ENCODE measurements at regions of chr1 and their contacts with region 1.

Region 1: GRCh38 chr1:220776720-220777326 is 9.9 kb upstream of the MTARC1 start:
- DNase-seq: peak; percentile 78
- CTCF ChIP-seq: peak; percentile 92

Region 2: GRCh38 chr1:219837274-219837993 is 939.4 kb before region 1 on chr1:
- in situ Hi-C with region 1: loop called (anchors 25 kb)
- DNase-seq: peak; percentile 47
- CTCF ChIP-seq: peak; percentile 28

Region 3: DNA sequence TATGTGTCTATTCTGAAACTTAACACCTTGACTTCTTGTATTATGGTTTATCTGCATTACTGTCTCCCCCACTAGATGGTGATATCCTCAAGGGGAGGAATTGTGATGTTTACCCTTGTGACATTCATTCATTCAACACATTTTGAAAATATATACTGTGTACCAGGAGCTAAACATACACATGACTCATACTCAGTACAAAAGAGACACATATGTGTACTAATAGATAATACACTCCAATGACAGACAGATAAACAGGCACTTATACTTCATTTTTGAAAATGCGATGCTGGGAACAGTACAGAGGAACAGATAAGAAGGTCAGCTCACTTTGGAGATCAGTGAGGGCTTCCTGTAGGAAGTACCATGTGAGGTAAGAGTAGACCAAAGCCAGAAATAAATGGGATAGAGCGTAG is 495.7 kb before region 1 on chr1:
- in situ Hi-C with region 1: loop called (anchors 25 kb)
- DNase-seq: no peak
- CTCF ChIP-seq: peak; percentile 41

Region 4: DNA sequence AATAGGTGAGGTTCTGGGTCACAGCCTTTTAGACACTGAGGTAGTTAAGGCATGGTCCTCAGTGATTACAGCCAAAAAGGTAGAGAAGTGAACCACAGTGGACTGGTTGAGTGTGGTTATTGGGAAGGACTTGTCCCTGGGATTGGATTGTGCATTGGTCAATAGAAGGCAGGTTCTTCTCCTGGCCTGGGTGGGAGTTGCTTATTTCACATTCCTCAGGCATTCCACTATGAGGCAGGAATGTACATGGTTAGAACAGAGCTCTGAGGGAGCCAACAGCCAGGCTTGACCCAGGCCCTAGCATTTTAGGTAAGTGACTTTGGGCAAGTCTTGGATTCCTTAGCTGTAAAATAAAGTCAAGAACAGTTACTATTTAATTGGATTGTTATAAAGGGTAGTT is 346.8 kb before region 1 on chr1:
- in situ Hi-C with region 1: no loop called
- DNase-seq: no peak
- CTCF ChIP-seq: no peak

Region 5: GRCh38 chr1:220655509-220655908 is 121.3 kb before region 1 on chr1:
- in situ Hi-C with region 1: no loop called
- DNase-seq: peak; percentile 47
- CTCF ChIP-seq: no peak

Region 6: GRCh38 chr1:220680085-220680687 is 96.6 kb before region 1 on chr1:
- in situ Hi-C with region 1: loop called (anchors 10 kb)
- DNase-seq: peak; percentile 63
- CTCF ChIP-seq: peak; percentile 49

Region 7: DNA sequence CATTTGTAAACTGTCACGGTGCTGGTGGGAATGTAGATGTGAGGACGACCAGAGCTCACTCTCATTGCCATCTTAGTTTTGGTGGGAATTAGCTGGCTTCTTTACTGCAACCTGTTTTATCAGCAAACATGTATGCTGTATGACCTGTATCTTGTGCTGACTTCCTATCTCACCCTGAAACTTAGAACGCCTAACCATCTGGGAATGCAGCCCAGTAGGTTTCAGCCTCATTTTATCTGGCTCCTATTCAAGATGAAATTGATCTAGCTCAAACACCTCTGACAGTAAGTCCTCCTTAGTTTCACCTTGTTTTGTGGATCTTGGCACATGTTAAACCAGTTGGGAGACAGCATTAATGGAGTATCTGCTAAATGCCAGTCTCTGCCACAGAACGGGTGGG is 277.1 kb after region 1 on chr1:
- in situ Hi-C with region 1: no loop called
- DNase-seq: no peak
- CTCF ChIP-seq: no peak